Right ventricle myocardium inferior (tissue), 1 donor: ENCODE measurements at regions of chrX and their contacts with region 1.

Region 1: GRCh38 chrX:121579016-121579760 is 531.8 kb downstream of the GLUD2 start:
- DNase-seq: no peak
- ATAC-seq: no peak

Region 2: DNA sequence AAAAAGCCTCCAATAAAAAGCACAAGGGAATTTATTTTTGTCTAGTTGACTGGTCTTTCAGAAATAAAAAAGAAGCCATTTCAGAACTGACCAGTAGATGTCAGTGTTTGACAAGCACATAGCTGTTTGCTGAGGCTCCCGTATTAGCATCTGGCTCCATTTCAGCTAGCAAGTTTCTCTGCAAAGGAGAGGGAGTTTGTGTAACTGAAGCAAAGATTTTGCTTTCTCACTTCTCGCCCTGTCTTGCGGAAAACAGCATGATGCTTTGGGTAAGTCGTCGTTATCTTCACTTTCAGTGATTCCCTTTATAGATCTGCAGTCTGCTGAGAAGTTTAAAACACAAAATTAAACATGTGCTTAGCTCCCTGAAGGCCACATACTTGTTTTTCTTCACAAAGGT is 789.1 kb before region 1 on chrX:
- intact Hi-C with region 1: loop called (anchors 5 kb)
- DNase-seq: no peak
- ATAC-seq: peak; percentile 46

Region 3: DNA sequence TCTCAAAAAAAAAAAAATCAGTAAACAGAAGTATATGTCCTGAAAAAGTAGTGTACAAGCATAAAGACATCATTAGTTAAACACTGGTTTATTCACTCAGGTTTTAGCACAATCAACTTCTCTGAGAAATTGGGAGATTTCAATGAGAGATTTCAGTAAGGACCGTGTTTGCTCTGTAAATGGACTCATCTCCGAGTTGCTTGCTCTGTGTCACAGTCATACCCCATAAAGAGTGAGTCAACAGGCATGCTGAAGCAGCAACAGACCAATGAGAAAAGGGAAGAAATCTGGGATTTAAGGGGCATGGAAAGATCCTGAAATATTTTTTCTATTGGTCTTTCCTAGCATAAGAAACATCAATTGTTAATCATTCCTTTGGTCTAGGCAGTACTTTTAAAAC is 527.1 kb before region 1 on chrX:
- intact Hi-C with region 1: no loop called
- DNase-seq: no peak
- ATAC-seq: no peak

Region 4: GRCh38 chrX:121298499-121298898 is 280.7 kb before region 1 on chrX:
- intact Hi-C with region 1: no loop called
- DNase-seq: no peak
- ATAC-seq: no peak

Region 5: DNA sequence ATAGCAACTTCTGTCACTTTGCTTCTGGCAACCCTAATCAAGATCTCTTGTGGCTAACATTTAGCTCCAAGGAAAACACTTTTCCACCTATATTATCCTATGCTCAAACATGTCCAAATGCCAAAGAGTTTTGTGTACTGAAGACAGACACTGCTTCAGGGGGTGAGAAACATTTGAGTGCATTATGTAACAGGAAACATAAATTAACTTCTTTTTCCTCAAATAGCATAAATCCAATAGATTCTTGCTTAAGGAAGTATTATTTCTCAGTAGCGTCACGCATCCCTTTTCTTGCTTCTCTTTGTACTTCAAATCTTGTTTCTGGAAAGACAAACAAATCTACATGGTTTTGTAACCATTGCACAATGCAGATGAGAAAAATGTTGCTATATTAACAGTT is 307.4 kb after region 1 on chrX:
- intact Hi-C with region 1: no loop called
- DNase-seq: no peak
- ATAC-seq: no peak